HepG2 (cell line): ENCODE measurements at regions of chr16 and their contacts with region 1.

Region 1: GRCh38 chr16:78235168-78235800 is 135.8 kb downstream of the WWOX start:
- DNase-seq: peak; percentile 65
- ATAC-seq: peak; percentile 96
- H3K4me3 ChIP-seq: no peak overlapping the region
- H3K27ac ChIP-seq: no peak overlapping the region
- H3K4me1 ChIP-seq: peaks cover 21% of the 10 kb centered on the region
- H3K27me3 ChIP-seq: no peaks in the 10 kb centered on the region
- CTCF ChIP-seq: peak; percentile 93
- EP300 ChIP-seq: no peak
- POLR2A ChIP-seq: no peak
- RAD21 ChIP-seq: peak; percentile 83

Region 2: GRCh38 chr16:77816293-77816692 is 419.0 kb before region 1 on chr16:
- CTCF ChIA-PET with region 1: no interaction called
- POLR2A ChIA-PET with region 1: no interaction called
- in situ Hi-C with region 1: no loop called
- intact Hi-C with region 1: no loop called
- DNase-seq: no peak
- ATAC-seq: no peak
- H3K4me3 ChIP-seq: no peak overlapping the region
- H3K27ac ChIP-seq: no peak overlapping the region
- H3K4me1 ChIP-seq: peaks cover 5% of the 10 kb centered on the region; the same call in 1 of the 2 replicates
- H3K27me3 ChIP-seq: no peaks in the 10 kb centered on the region; a peak in 1 of 5 replicates
- CTCF ChIP-seq: no peak
- EP300 ChIP-seq: no peak
- POLR2A ChIP-seq: no peak
- RAD21 ChIP-seq: no peak

Region 3: GRCh38 chr16:78761427-78761826 is 526.1 kb after region 1 on chr16:
- CTCF ChIA-PET with region 1: no interaction called
- POLR2A ChIA-PET with region 1: no interaction called
- in situ Hi-C with region 1: loop called (anchors 10 kb)
- intact Hi-C with region 1: no loop called
- DNase-seq: no peak
- ATAC-seq: no peak
- H3K4me3 ChIP-seq: no peak overlapping the region
- H3K27ac ChIP-seq: no peak overlapping the region
- H3K4me1 ChIP-seq: peaks cover 35% of the 10 kb centered on the region
- H3K27me3 ChIP-seq: no peaks in the 10 kb centered on the region
- CTCF ChIP-seq: no peak
- EP300 ChIP-seq: no peak
- POLR2A ChIP-seq: no peak
- RAD21 ChIP-seq: no peak

Region 4: GRCh38 chr16:79047229-79047983 is 812.1 kb after region 1 on chr16:
- CTCF ChIA-PET with region 1: no interaction called
- POLR2A ChIA-PET with region 1: no interaction called
- in situ Hi-C with region 1: loop called (anchors 25 kb)
- intact Hi-C with region 1: no loop called
- DNase-seq: peak; percentile 29
- ATAC-seq: peak; percentile 80
- H3K4me3 ChIP-seq: no peak overlapping the region
- H3K27ac ChIP-seq: no peak overlapping the region
- H3K4me1 ChIP-seq: no peaks in the 10 kb centered on the region
- H3K27me3 ChIP-seq: no peaks in the 10 kb centered on the region
- CTCF ChIP-seq: peak; percentile 60
- EP300 ChIP-seq: no peak
- POLR2A ChIP-seq: no peak
- RAD21 ChIP-seq: peak; percentile 35; the same call in 1 of the 2 replicates